ENCODE measurements at regions of chr3 and their contacts with region 1.

Region 1: DNA sequence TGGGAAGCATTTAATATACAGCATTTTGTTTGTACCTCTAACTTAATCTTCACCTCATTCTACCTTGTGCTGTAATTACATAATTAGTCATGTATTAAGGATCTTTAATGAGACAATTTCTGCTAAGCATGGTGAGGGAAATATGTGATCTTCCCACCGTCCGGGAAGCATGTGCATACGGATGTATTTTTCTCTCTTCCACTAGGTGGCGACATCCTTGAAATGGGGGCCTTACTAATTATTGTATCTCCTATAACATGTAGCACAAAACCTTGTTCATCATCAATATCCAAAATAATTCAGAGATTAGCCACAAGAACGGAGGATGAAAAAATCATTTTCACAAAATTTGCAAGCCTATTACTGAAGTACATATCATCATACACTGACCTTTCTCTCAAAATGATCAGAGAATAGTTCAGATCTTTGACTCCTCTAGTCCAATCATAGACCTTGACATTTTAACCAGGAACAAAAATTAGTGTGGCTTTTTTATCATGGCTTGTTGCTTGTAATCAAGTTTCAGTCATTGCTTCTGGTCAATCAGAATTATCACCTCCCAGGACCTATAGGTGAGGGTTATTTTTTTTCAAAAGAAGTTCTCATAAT is 148.9 kb upstream of the GBE1 start:
- DNase-seq: no peak
- ATAC-seq: peak; percentile 42
- H3K4me3 Mint-ChIP-seq: no peak overlapping the region
- H3K27ac Mint-ChIP-seq: no peak overlapping the region
- H3K4me1 Mint-ChIP-seq: no peaks in the 10 kb centered on the region
- H3K27me3 Mint-ChIP-seq: peaks cover 2% of the 10 kb centered on the region
- CTCF ChIP-seq: peak; percentile 57

Region 2: GRCh38 chr3:81490541-81491288 is 419.6 kb before region 1 on chr3:
- CTCF ChIA-PET with region 1: no interaction called
- POLR2A ChIA-PET with region 1: no interaction called
- intact Hi-C with region 1: loop called (anchors 10 kb)
- DNase-seq: peak; percentile 20
- ATAC-seq: peak; percentile 73
- H3K4me3 Mint-ChIP-seq: no peak overlapping the region
- H3K27ac Mint-ChIP-seq: no peak overlapping the region
- H3K4me1 Mint-ChIP-seq: peaks cover 3% of the 10 kb centered on the region
- H3K27me3 Mint-ChIP-seq: no peaks in the 10 kb centered on the region
- CTCF ChIP-seq: peak; percentile 82

Region 3: DNA sequence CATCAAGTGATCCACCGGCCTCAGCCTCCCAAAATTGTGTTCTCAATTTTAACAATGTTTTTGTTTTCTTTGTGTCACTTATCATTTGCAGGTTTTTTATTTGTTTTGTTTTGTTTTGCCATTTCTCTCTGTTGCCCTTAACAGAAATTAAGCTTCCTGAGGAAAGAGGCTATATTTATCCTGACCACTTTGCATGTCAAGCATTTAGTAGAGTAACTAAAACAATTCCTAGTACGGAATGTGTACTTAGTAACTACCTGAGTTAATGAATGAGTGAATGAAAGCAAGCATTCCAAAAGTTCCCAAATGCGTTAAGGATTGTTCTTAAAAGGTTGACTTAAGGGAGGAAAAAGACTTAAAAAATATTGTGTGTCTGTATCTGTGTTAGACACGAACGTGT is 342.0 kb before region 1 on chr3:
- CTCF ChIA-PET with region 1: no interaction called
- POLR2A ChIA-PET with region 1: no interaction called
- intact Hi-C with region 1: no loop called
- DNase-seq: no peak
- ATAC-seq: no peak
- H3K4me3 Mint-ChIP-seq: no peak overlapping the region
- H3K27ac Mint-ChIP-seq: no peak overlapping the region
- H3K4me1 Mint-ChIP-seq: no peaks in the 10 kb centered on the region
- H3K27me3 Mint-ChIP-seq: no peaks in the 10 kb centered on the region
- CTCF ChIP-seq: no peak

Region 4: DNA sequence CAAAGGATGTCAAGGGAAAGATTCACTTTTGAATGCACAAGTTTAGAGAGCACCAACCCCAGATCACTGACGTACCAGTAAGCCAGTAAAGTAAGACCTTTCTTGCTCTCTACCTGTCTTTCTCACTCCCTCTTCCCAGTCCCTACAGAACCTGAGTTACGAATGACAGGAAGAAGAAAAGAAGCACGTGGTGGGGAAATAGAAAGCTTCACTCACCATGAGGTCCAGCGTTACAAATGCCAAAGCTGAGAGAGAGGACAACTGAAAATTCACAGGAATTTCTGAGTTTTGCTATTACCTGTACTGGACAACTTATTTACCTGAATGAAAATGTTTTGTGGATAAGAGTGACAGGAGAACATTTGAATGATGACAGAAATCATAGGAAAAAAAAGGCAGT is 15.8 kb before region 1 on chr3:
- CTCF ChIA-PET with region 1: interaction called, 11 read pairs
- POLR2A ChIA-PET with region 1: no interaction called
- intact Hi-C with region 1: no loop called
- DNase-seq: no peak
- ATAC-seq: no peak
- H3K4me3 Mint-ChIP-seq: no peak overlapping the region
- H3K27ac Mint-ChIP-seq: no peak overlapping the region
- H3K4me1 Mint-ChIP-seq: no peaks in the 10 kb centered on the region
- H3K27me3 Mint-ChIP-seq: no peaks in the 10 kb centered on the region
- CTCF ChIP-seq: no peak

Region 5: DNA sequence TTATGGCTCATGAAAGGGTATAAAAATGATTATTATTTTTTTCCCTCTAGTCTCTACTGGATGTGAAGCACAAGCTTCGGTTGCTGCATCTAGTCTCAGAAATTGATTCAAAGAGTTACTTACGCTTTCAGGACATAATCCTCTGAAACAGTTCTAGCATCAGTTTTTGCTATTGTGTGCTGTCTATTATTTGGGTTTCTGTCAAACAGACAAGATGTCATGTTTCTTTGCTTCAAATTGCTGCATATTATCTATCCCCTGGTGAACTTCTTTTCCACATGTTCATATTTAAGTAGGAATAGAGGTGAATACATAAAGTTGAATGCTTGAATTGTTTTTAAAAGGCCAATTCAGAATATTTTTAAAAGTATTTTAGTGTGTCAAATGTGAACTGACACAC is 12.7 kb after region 1 on chr3:
- CTCF ChIA-PET with region 1: interaction called, 10 read pairs
- POLR2A ChIA-PET with region 1: no interaction called
- intact Hi-C with region 1: no loop called
- DNase-seq: no peak
- ATAC-seq: no peak
- H3K4me3 Mint-ChIP-seq: no peak overlapping the region
- H3K27ac Mint-ChIP-seq: no peak overlapping the region
- H3K4me1 Mint-ChIP-seq: no peaks in the 10 kb centered on the region
- H3K27me3 Mint-ChIP-seq: no peaks in the 10 kb centered on the region
- CTCF ChIP-seq: no peak

Region 6: DNA sequence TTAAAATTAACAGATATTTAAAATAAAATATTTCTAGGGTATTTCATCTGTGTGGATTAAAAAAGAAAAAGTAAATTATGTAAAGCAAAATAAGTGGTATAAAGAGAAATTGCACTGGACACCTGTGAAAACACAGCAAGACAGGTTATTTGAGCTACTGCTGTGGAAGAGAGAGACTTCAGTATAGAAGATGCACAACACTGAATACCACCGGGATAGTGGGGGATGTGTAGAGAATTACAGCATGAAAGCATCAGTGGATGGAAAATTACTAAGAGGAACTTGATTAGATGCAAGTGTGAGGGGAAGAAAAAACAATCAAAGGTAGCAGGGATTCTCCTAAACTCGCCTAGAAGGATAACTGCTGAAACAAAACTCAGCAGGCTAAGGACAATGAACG is 1093.6 kb after region 1 on chr3:
- CTCF ChIA-PET with region 1: no interaction called
- POLR2A ChIA-PET with region 1: no interaction called
- intact Hi-C with region 1: no loop called
- DNase-seq: no peak
- ATAC-seq: no peak
- H3K4me3 Mint-ChIP-seq: no peak overlapping the region
- H3K27ac Mint-ChIP-seq: no peak overlapping the region
- H3K4me1 Mint-ChIP-seq: no peaks in the 10 kb centered on the region
- H3K27me3 Mint-ChIP-seq: no peaks in the 10 kb centered on the region
- CTCF ChIP-seq: no peak

Measured in activated B cell treated with CpG ODN at 0.5 μM for 24 hours (primary cell).